ENCODE measurements at regions of chr3 and their contacts with region 1.

Region 1: GRCh38 chr3:171753665-171754408 is 56.4 kb downstream of the PLD1 start:
- DNase-seq: no peak
- ATAC-seq: peak; percentile 13; the same call in 2 of the 3 replicates
- H3K4me3 ChIP-seq: no peak overlapping the region
- H3K27ac ChIP-seq: no peak overlapping the region; the same call in 1 of the 2 replicates
- H3K4me1 ChIP-seq: no peaks in the 10 kb centered on the region; the same call in 1 of the 2 replicates
- H3K27me3 ChIP-seq: peaks cover 0 to 3% of the 10 kb centered on the region in 2 experiments; a peak in 1 of 4 replicates
- CTCF ChIP-seq: no peak
- EP300 ChIP-seq: no peak
- POLR2A ChIP-seq: no peak
- RAD21 ChIP-seq: no peak

Region 2: DNA sequence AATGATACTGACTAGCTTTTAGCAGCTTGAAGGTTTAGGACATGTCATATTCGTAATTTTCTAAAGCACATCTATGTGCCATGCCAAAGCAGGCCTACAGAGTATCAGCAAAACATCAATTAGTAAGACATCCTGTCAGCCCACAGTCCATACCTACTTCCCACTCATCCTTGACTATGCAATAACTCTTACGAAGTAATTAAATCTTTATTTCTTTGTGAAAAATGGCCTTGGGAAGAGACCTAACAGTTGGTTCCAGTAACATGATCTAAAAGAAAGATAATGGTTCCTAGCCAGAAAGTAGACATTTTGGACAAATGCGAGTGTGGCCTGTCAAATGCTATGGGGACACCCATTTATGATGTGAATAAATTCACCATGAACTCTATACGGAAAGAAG is 121.1 kb before region 1 on chr3:
- CTCF ChIA-PET with region 1: no interaction called
- POLR2A ChIA-PET with region 1: no interaction called
- RAD21 ChIA-PET with region 1: no interaction called
- SMC1A ChIA-PET with region 1: no interaction called
- in situ Hi-C with region 1: no loop called
- intact Hi-C with region 1: no loop called
- DNase-seq: no peak
- ATAC-seq: no peak
- H3K4me3 ChIP-seq: no peak overlapping the region
- H3K27ac ChIP-seq: no peak overlapping the region
- H3K4me1 ChIP-seq: no peaks in the 10 kb centered on the region
- H3K27me3 ChIP-seq: no peaks in the 10 kb centered on the region
- CTCF ChIP-seq: no peak
- EP300 ChIP-seq: no peak
- POLR2A ChIP-seq: no peak
- RAD21 ChIP-seq: no peak

Region 3: GRCh38 chr3:171680726-171681416 is 73.0 kb before region 1 on chr3:
- CTCF ChIA-PET with region 1: no interaction called
- POLR2A ChIA-PET with region 1: no interaction called
- RAD21 ChIA-PET with region 1: no interaction called
- SMC1A ChIA-PET with region 1: no interaction called
- in situ Hi-C with region 1: no loop called
- intact Hi-C with region 1: no loop called
- DNase-seq: no peak
- ATAC-seq: no peak
- H3K4me3 ChIP-seq: no peak overlapping the region
- H3K27ac ChIP-seq: no peak overlapping the region
- H3K4me1 ChIP-seq: no peaks in the 10 kb centered on the region
- H3K27me3 ChIP-seq: no peaks in the 10 kb centered on the region; a peak in 1 of 4 replicates
- CTCF ChIP-seq: no peak
- EP300 ChIP-seq: no peak
- POLR2A ChIP-seq: no peak
- RAD21 ChIP-seq: no peak

Region 4: DNA sequence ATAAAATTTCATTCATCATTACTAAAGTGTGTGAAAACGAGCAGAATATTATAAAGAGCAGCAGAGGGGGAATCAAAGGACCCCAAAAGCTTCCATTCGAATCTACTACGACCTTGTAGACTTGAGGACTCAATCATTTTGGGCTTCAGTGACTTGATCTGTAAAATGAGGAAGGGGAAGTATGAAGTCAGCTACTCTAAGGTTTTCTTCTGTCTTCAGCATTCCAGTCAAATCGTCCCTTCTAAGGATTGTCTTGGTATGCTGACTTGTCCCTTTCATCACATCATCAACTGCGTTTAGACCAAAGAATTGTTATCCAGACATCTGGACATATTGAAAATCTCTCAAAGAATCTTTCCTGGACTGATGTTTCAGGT is 11.7 kb after region 1 on chr3:
- CTCF ChIA-PET with region 1: interaction called, 210 read pairs
- POLR2A ChIA-PET with region 1: interaction called, 18 read pairs
- RAD21 ChIA-PET with region 1: interaction called, 119 read pairs
- SMC1A ChIA-PET with region 1: interaction called, 192 read pairs
- in situ Hi-C with region 1: no loop called
- intact Hi-C with region 1: no loop called
- DNase-seq: no peak
- ATAC-seq: no peak
- H3K4me3 ChIP-seq: no peak overlapping the region
- H3K27ac ChIP-seq: no peak overlapping the region
- H3K4me1 ChIP-seq: no peaks in the 10 kb centered on the region
- H3K27me3 ChIP-seq: no peaks in the 10 kb centered on the region
- CTCF ChIP-seq: no peak
- EP300 ChIP-seq: no peak
- POLR2A ChIP-seq: no peak
- RAD21 ChIP-seq: no peak

Measured in GM12878 (cell line).